ENCODE measurements at regions of chr6 and their contacts with region 1.

Region 1: DNA sequence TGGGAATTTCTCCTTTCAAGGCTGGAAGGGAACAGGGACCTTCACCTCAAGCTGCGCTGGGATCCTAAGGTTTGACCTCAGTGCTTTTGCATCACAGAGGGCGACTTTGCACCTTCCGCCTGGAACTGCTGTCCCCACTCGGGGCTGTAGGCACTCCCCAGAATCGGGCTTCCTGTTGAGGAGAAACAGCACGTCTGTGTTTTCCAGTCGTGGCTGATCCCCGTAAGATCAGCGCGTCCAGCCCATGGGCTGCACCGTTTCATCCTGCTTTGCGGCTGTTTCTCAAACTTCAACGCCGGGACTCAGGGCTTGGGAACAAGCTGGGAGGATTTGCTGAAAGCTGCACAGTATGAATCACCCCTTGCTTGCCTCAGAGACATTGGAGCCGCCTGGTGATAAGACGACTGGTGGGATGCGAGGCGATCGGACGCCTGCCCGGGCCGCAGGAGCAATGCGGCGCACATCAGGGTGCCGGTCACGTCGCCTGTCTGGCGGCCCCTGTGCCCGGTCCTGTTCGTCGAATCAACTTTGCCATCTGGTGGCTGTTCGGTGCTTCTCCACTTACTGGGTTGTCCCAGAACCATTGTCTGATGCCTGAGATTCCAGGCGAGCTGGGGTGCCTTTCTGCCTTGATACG is 53.6 kb upstream of the FRMD1 start:
- DNase-seq: peak; percentile 25 to 35
- ATAC-seq: peak; percentile 68 to 83
- H3K4me3 ChIP-seq: peak overlapping the region; percentile 34 to 51 (median 44)
- H3K27ac ChIP-seq: peak overlapping the region in 1 of 4 donors; percentile 34
- H3K4me1 ChIP-seq: peaks cover 5 to 6% of the 10 kb centered on the region in 2 donors
- H3K27me3 ChIP-seq: no peaks in the 10 kb centered on the region
- CTCF ChIP-seq: peak in 4 of 5 experiments; percentile 42 to 64 (median 46)
- POLR2A ChIP-seq: no peak

Region 2: DNA sequence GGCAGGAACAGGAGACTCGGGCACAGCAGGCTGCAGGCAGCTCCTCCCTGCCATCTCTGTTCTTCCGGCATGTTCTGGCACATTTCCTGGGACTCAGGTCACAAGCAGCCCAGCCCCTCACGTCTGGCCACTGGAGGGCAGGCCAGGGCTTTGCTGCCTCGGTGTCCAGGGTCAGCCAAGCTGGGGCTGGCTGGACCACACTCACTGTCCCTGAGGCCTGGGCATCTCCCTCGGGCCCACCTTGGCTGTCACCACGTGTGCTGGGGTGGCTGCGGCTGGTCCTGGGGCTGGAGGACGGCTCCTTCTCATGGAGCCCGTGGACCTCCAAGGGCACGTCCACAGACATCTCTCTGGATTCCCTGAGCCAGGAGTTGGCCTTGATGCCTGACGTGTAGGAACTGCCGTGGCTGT is 72.1 kb before region 1 on chr6:
- in situ Hi-C with region 1: no loop called
- intact Hi-C with region 1: loop called (anchors 1 kb)
- DNase-seq: peak in 1 of 2 donors; percentile 26
- ATAC-seq: peak; percentile 34 to 36
- H3K4me3 ChIP-seq: no peak overlapping the region
- H3K27ac ChIP-seq: no peak overlapping the region
- H3K4me1 ChIP-seq: peaks cover 2% of the 10 kb centered on the region in 2 donors
- H3K27me3 ChIP-seq: no peaks in the 10 kb centered on the region
- CTCF ChIP-seq: peak; percentile 20 to 53 (median 42)
- POLR2A ChIP-seq: no peak

Region 3: DNA sequence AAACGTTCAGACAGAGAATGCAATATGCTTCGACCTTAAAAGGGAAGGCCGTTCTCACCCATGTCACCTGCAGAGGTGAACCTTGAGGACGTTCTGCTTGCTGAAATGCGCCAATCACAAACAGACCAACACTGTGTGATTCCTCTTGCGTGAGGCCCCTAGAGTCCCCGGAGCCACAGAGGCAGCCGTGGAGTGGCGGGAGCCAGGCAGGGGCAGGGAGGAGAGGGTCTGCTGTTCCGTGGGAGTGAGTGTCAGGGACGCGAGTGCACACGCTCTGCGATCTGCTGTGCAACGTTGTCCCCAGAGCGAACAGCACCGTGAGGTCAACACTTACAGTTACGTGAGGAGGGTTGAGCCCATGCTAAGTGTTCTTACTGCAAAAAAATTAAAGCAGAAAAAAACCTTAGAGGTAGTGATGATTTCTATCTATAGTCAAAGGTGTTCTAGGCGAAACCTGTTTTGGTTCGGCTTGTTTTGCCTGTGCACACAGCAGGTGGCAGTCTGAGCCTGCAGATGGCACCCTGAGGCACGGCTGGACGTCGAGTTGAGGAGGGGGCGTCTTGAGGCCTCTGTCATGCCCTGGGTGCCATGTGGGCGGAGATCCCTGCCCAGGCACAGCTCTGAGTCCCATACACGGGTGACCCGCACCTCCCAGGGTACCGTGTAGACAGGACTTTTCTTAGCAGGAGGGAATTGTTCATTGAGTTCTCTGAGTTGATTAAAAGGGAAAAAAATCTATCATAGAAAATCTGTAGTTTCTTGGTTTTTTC is 18.1 kb after region 1 on chr6:
- in situ Hi-C with region 1: no loop called
- intact Hi-C with region 1: no loop called
- DNase-seq: no peak
- ATAC-seq: no peak
- H3K4me3 ChIP-seq: no peak overlapping the region
- H3K27ac ChIP-seq: no peak overlapping the region
- H3K4me1 ChIP-seq: no peaks in the 10 kb centered on the region
- H3K27me3 ChIP-seq: peaks cover 5 to 19% (median 17%) of the 10 kb centered on the region in 3 donors
- CTCF ChIP-seq: no peak
- POLR2A ChIP-seq: no peak

Measured in gastrocnemius medialis (tissue), 4 donors.